ENCODE measurements at regions of chr2 and their contacts with region 1.

Region 1: DNA sequence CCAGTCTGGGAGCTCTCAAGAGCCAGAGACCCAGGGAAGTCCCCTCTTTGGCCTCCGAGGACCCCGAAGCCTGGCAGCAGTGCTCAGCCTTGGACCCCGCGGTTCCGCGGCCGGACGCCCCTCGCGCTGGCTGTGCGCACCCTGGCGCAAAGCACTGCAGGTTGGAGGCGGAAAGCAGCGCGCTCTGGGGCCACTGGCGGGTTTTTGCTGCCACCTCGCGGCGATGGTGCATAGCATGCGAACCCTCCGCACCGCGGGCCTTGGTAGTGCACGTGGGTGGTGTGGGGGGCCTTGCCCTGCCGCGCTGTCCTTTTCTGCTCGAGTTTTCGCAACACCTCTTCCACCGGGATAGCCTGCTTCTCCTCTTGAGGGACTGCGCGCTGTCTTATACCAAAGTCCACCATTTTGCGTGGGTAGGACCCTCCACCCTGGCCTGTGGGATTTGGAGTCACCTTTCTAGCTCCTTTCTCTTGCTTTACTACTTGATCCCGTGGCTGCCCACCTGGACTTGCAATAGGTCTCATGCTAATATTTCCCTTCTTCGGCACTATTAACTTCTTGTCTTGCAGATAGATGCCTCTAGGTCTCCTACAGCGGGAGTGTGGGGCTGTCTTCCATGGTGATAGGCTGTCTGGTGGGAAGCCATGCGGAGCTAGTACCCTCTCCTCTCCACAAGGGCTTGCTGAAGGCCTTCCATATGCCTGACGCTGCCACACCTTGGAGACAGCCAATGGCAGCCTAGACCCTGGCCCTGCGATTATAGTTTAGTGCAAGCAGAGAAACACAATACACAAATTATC is 14.3 kb downstream of the SIX3 start:
- DNase-seq: peak; percentile 49
- H3K4me3 ChIP-seq: no peak overlapping the region
- H3K27ac ChIP-seq: no peak overlapping the region
- H3K4me1 ChIP-seq: peaks cover 8% of the 10 kb centered on the region
- H3K27me3 ChIP-seq: peaks cover 18% of the 10 kb centered on the region
- CTCF ChIP-seq: peak; percentile 69 to 91 (median 83)
- POLR2A ChIP-seq: no peak

Region 2: DNA sequence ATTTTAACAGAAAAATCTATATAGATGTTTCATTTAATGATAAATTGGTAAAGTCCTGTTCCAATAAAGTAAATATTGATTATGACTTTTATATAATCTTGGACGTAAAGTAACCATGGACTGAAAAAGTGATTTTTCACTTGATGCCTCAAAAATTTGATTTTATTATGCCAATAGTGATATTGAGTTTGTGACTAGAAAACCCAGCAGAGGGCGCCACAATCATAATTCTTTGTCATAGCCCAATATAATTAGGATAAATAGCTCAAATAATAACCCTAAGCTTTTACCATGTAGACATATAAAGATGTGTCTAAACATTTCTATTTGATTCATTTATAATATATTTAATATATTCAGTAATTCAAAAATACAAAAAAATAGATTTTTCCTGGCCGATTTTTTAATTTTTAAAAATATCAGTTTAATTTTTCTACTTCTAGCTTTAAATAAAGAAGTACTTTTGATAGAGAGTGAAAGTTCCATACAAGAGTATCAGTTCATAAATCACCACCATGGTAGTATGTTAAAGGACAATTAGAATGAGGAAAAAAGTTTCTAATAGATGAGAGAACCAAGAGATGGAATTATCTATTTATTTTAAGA is 563.4 kb before region 1 on chr2:
- intact Hi-C with region 1: loop called (anchors 5 kb)
- DNase-seq: peak; percentile 14
- H3K4me3 ChIP-seq: no peak overlapping the region
- H3K27ac ChIP-seq: no peak overlapping the region
- H3K4me1 ChIP-seq: no peaks in the 10 kb centered on the region
- H3K27me3 ChIP-seq: no peaks in the 10 kb centered on the region
- CTCF ChIP-seq: peak; percentile 22 to 52 (median 36)
- POLR2A ChIP-seq: no peak

Region 3: DNA sequence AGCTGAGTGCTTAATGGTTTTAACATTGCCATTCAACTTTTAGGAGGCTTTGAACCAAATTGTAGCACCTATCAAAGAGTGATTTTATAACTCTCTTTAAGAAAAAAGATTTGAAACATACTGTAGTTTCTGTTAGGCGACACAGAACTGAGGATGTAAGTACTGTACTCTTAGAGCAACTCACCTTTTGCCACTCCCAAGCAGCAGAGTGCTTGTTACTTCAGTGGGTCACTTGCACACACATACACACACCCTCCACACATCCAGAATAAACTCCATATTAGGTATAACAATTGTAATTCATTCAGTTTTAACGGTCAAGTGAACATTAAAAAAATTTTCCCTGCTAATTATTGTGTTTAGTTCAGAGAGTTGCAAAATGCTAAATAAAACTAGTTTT is 475.7 kb before region 1 on chr2:
- intact Hi-C with region 1: loop called (anchors 1 kb)
- DNase-seq: no peak
- H3K4me3 ChIP-seq: no peak overlapping the region
- H3K27ac ChIP-seq: no peak overlapping the region
- H3K4me1 ChIP-seq: no peaks in the 10 kb centered on the region
- H3K27me3 ChIP-seq: no peaks in the 10 kb centered on the region
- CTCF ChIP-seq: no peak
- POLR2A ChIP-seq: no peak